Esophagus squamous epithelium (tissue), 5 donors: ENCODE measurements at regions of chr3 and their contacts with region 1.

Region 1: DNA sequence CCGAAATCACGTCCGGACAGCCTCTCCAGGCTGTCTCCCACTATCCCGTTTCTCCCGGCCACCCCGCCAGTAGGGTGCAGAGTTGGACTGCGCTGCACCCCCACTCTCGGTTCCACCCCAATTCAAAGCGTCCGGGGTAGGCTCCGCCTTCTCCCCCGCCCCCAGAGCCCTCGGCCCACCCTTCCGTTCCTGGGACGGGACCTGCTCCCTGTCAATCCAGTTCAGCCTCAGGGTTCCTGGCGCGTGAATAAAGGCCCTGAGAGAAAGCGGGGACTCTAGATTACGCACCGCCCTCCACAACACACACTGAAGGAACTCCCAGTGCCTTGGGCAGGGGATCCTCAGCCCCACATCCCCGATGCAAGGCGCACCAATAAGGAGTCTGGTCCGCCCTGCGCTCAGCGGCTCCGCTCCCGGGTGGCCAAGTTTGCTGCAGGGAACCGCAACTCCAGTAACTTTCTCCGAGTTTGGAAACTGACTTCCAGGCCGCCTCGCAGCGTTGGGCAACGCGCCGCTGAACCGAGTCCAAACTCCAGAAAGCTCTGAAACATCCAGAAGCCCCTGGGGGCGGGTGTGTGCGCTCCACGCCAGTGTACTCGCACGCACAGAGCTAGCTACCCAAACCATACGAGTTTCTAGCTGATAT is 1.9 kb downstream of the ADAMTS9 start:
- DNase-seq: no peak
- H3K4me3 ChIP-seq: peak overlapping the region; percentile 44 to 70 (median 60)
- H3K27ac ChIP-seq: peak overlapping the region; percentile 82 to 96 (median 87)
- H3K4me1 ChIP-seq: peaks cover 0 to 64% (median 0%) of the 10 kb centered on the region in 3 donors
- H3K27me3 ChIP-seq: peaks cover 0 to 70% (median 0%) of the 10 kb centered on the region in 4 donors
- CTCF ChIP-seq: peak in 5 of 6 experiments; percentile 19 to 47 (median 34)
- POLR2A ChIP-seq: peak in 2 of 4 donors; percentile 70 to 87

Region 2: GRCh38 chr3:64533617-64534317 is 152.2 kb before region 1 on chr3:
- intact Hi-C with region 1: loop called (anchors 10 kb)
- DNase-seq: no peak
- H3K4me3 ChIP-seq: peak overlapping the region in 1 of 4 donors; percentile 37
- H3K27ac ChIP-seq: peak overlapping the region in 2 of 4 donors; percentile 26 to 42
- H3K4me1 ChIP-seq: peaks cover 0 to 29% (median 0%) of the 10 kb centered on the region in 3 donors
- H3K27me3 ChIP-seq: peaks cover 0 to 19% (median 0%) of the 10 kb centered on the region in 4 donors
- CTCF ChIP-seq: peak; percentile 53 to 83 (median 76)
- POLR2A ChIP-seq: no peak

Region 3: GRCh38 chr3:65112751-65113300 is 426.9 kb after region 1 on chr3:
- intact Hi-C with region 1: no loop called
- DNase-seq: no peak
- H3K4me3 ChIP-seq: no peak overlapping the region
- H3K27ac ChIP-seq: no peak overlapping the region
- H3K4me1 ChIP-seq: no peaks in the 10 kb centered on the region
- H3K27me3 ChIP-seq: no peaks in the 10 kb centered on the region
- CTCF ChIP-seq: no peak
- POLR2A ChIP-seq: no peak